Activated T-helper 1 cell treated with anti-CD3 and anti-CD28 coated beads, Interleukin-12 subunit alpha, Interleukin-12 subunit beta, Interleukin-2, Interleukin-4 antibody, amounts not matched to agents 30 ng/mL and 10 ng/mL and 1 ng/mL, durations not matched to agents 14 hours and 24 hours and 36 hours (primary cell): ENCODE measurements at regions of chr15 and their contacts with region 1.

Region 1: DNA sequence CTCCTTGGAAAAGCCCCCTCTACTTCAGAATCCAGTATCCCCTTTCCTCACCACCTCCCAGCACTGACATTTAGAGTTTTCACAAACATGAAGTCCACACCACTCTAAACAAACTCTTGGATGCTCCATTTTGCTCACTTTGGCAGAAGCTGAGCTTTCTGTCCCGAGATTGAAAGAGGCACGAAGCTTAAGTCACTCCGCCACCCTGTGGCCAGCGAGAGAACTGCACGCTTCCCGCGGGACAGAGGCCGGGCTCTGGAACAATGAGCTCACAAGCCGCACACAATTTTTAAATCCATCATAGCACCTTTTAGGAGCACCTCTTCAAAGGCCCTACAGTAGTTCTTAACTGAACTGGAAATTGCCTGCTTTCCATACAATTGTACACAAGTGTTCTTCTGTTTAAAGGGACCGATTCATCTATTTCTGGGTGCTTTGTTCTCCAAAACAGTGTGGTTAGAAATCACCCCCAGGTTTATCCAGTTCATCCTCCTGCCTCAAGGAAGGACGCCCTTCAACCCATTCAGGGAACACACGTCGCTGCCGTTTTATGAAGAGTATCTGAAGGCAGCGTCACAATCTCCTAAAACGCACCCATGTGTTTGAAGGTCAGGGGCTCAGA is 226.1 kb downstream of the VPS13C start:
- DNase-seq: peak; percentile 59
- H3K4me3 Mint-ChIP-seq: no peak overlapping the region
- H3K27ac Mint-ChIP-seq: no peak overlapping the region
- H3K4me1 Mint-ChIP-seq: peaks cover 7% of the 10 kb centered on the region
- H3K27me3 Mint-ChIP-seq: peaks cover 16% of the 10 kb centered on the region

Region 2: GRCh38 chr15:61169904-61170695 is 664.1 kb before region 1 on chr15:
- intact Hi-C with region 1: loop called (anchors 1 kb)
- DNase-seq: peak; percentile 37
- H3K4me3 Mint-ChIP-seq: peak overlapping the region; percentile 63
- H3K27ac Mint-ChIP-seq: peak overlapping the region; percentile 24
- H3K4me1 Mint-ChIP-seq: peaks cover 21% of the 10 kb centered on the region
- H3K27me3 Mint-ChIP-seq: peaks cover 13% of the 10 kb centered on the region

Region 3: DNA sequence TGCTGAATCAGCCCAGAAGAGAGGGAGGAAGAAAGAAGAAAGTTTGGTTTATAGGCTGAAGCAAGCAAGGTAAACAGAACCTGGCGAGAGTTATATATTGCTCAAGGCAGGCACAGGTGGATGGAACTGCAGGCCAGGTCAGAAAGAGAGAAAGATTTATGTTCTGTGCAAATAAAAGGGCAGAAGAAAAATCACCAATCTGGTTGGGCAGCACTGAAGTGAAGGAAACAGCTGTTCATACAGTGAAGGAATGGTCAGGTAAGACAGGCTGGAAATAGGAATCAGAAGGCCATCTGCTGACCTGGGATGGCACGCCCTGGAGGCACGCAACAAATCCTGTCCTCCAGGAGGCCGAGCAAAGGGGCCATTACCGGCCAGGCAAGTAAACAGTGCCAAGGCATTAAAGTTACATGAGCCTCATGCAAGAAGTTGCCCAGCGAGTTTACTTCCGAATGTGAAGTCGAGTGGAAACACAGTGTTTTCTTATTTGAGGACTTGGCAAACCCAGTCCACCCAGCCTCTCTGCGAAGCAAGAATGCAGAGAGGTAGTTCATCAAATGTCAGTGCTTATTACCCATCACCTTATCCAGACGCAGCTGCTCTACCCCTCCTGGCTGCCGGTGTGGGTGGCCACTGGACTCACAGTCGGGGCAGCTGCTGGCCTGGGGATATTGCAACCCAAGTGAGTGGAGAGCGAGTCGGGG is 83.7 kb before region 1 on chr15:
- intact Hi-C with region 1: no loop called
- DNase-seq: no peak
- H3K4me3 Mint-ChIP-seq: no peak overlapping the region
- H3K27ac Mint-ChIP-seq: no peak overlapping the region
- H3K4me1 Mint-ChIP-seq: no peaks in the 10 kb centered on the region
- H3K27me3 Mint-ChIP-seq: peaks cover 2% of the 10 kb centered on the region

Region 4: DNA sequence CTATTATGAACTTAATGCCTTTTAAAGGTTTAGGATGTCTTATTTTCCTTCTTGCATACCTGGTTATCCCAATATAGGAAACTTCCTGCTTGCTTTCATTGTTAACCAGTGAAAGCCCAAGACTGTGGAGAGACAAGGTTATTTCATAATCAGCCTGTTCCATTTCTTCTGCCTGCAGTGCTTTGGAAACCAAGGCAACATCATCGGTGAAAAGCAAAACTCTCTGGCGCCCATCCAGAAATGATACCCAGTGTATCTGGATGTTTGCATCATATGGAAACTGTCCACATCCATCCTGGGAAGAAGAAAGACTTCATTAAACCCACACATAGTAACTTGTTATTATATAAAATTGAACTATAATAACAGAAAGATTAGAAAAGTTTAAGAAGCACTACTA is 55.9 kb after region 1 on chr15:
- intact Hi-C with region 1: no loop called
- DNase-seq: no peak
- H3K4me3 Mint-ChIP-seq: no peak overlapping the region
- H3K27ac Mint-ChIP-seq: peak overlapping the region; percentile 86
- H3K4me1 Mint-ChIP-seq: peaks cover 13% of the 10 kb centered on the region
- H3K27me3 Mint-ChIP-seq: no peaks in the 10 kb centered on the region